IMR-90 (cell line): ENCODE measurements at regions of chr11 and their contacts with region 1.

Region 1: GRCh38 chr11:15650105-15650938 is 535.6 kb downstream of the INSC start:
- DNase-seq: peak; percentile 87
- ATAC-seq: peak; percentile 98
- H3K4me3 ChIP-seq: peak overlapping the region; percentile 29; the same call in 1 of the 2 replicates
- H3K27ac ChIP-seq: peak overlapping the region; percentile 68
- H3K4me1 ChIP-seq: peaks cover 9% of the 10 kb centered on the region
- H3K27me3 ChIP-seq: no peaks in the 10 kb centered on the region; the same call in 1 of the 2 replicates
- CTCF ChIP-seq: peak; percentile 98
- POLR2A ChIP-seq: peak; percentile 56
- RAD21 ChIP-seq: peak; percentile 97

Region 2: DNA sequence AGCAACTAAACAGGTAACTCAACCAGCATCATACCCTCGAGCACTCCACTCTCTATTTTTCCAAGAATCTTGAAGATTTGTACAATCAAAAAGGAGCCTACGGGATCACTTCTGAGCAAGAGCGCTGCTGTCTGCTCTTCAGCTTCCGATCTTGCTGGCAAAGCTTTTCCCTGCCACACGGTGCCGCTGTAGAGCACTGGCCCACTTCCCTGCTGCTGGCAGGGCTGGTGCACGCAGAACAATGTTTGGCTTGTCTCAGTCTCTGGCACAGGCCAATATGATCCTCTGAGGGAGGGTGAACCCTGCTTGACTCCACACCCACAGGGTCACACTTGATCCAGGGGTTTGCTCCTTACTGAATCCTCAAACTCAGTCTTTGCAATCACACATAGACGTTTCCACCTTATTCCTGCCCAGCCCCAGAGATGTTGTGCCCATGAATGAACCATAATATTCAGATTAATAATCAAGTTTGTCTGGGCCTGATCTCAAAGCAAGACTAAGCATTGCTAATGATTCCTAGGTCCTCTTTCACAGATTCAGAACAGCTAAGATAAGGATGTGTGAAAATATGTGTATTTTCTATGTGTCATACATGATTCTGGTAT is 169.5 kb after region 1 on chr11:
- CTCF ChIA-PET with region 1: interaction called, 4 read pairs
- POLR2A ChIA-PET with region 1: no interaction called
- dilution Hi-C with region 1: no loop called
- in situ Hi-C with region 1: no loop called
- intact Hi-C with region 1: loop called (anchors 2 kb)
- DNase-seq: peak; percentile 19
- ATAC-seq: no peak
- H3K4me3 ChIP-seq: no peak overlapping the region
- H3K27ac ChIP-seq: no peak overlapping the region
- H3K4me1 ChIP-seq: peaks cover 13% of the 10 kb centered on the region
- H3K27me3 ChIP-seq: no peaks in the 10 kb centered on the region
- CTCF ChIP-seq: peak; percentile 46
- POLR2A ChIP-seq: no peak
- RAD21 ChIP-seq: peak; percentile 50

Region 3: DNA sequence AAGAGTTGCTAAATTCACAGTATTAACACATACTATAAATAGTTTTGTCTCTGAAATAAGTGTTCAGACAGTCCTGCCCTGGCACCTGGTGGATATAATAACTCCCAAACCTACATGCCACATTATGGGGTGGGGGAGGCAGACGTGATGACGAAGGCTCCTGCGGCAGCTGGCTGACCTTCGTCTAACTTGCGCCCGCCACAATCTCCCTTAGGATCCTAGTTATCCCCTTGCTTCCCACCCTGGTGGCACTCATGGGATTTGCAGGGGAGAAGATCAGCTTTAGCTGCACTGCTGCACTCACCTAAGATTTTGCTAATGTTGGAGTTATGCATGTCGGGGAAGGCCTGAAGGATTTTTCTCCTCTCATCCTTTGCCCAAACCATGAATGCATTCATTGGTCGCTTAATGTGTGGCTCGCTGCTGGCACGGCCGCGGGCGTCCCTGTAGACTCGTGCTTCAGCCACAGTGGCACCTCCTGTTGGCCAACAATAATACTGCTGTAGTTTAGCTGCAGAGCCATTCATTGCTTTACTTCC is 338.4 kb after region 1 on chr11:
- CTCF ChIA-PET with region 1: no interaction called
- POLR2A ChIA-PET with region 1: no interaction called
- dilution Hi-C with region 1: no loop called
- in situ Hi-C with region 1: no loop called
- intact Hi-C with region 1: loop called (anchors 5 kb)
- DNase-seq: no peak
- ATAC-seq: no peak
- H3K4me3 ChIP-seq: no peak overlapping the region
- H3K27ac ChIP-seq: peak overlapping the region; percentile 73; the same call in 1 of the 2 replicates
- H3K4me1 ChIP-seq: peaks cover 22% of the 10 kb centered on the region
- H3K27me3 ChIP-seq: no peaks in the 10 kb centered on the region
- CTCF ChIP-seq: no peak
- POLR2A ChIP-seq: no peak
- RAD21 ChIP-seq: 0 out of 2 replicates have a peak, but pooled peaks have one; percentile 24

Region 4: GRCh38 chr11:16613512-16614381 is 963.4 kb after region 1 on chr11:
- CTCF ChIA-PET with region 1: no interaction called
- POLR2A ChIA-PET with region 1: no interaction called
- dilution Hi-C with region 1: no loop called
- in situ Hi-C with region 1: no loop called
- intact Hi-C with region 1: loop called (anchors 1 kb)
- DNase-seq: peak; percentile 83
- ATAC-seq: peak; percentile 97
- H3K4me3 ChIP-seq: peak overlapping the region; percentile 67
- H3K27ac ChIP-seq: peak overlapping the region; percentile 36
- H3K4me1 ChIP-seq: peaks cover 5% of the 10 kb centered on the region; the same call in 1 of the 2 replicates
- H3K27me3 ChIP-seq: 0 out of 2 replicates have a peak, but pooled peaks cover 2% of the 10 kb centered on the region
- CTCF ChIP-seq: peak; percentile 92
- POLR2A ChIP-seq: no peak
- RAD21 ChIP-seq: peak; percentile 96